ENCODE measurements at regions of chr2 and their contacts with region 1.

Region 1: DNA sequence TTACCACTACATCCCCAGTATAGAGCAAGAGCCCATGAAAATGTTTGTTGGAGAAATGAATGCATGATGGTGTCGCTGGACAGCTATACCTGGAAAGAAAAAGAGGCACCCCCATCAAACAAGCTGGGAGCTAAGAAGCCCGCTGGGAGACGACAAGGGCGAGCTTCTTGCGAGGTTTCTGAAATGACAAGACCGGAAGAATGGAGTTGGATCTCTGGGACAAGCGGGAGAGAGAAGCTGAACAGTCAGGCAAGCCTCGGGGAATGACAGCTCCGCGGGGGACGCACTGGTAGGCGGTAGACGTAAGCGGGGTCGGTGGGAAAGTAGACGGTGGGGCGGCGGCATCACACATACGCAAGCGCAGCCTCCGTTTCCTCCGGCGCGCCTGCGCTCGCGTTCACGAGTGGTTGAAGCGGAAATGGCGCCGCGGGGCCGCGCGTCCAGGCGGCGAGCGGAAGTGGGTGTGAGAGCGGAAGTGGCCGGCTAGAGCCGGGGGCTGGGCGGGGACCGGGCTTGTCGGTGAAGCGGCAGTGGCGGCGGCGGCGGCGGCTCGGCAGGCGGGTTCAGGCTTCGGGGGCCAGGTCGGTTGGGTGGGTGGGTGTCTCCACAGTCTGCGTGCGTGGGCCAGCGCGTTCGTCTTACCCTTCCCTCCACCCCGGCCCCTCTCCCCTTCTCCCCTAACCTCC is at the start of gene ARPC2:
- DNase-seq: peak; percentile 91 to 97 (median 95)
- ATAC-seq: peak; percentile 90
- H3K4me3 ChIP-seq: peak within 1 kb of the TSS; percentile 90
- H3K4me3 Mint-ChIP-seq: peak within 1 kb of the TSS; percentile 90 to 97 (median 94)
- H3K27ac ChIP-seq: peak within 1 kb of the TSS; percentile 99
- H3K27ac Mint-ChIP-seq: peak within 1 kb of the TSS; percentile 94 to 98 (median 97)
- H3K4me1 ChIP-seq: peaks cover 25 to 33% of the 10 kb centered on the region in 2 donors
- H3K4me1 Mint-ChIP-seq: peaks cover 31 to 48% (median 42%) of the 10 kb centered on the region in 7 donors
- H3K27me3 ChIP-seq: no peaks in the 10 kb centered on the region
- H3K27me3 Mint-ChIP-seq: peaks cover 0 to 6% (median 0%) of the 10 kb centered on the region in 5 donors
- total RNA-seq, gene ARPC2: 330 to 694 (median 368) TPM

Region 2: DNA sequence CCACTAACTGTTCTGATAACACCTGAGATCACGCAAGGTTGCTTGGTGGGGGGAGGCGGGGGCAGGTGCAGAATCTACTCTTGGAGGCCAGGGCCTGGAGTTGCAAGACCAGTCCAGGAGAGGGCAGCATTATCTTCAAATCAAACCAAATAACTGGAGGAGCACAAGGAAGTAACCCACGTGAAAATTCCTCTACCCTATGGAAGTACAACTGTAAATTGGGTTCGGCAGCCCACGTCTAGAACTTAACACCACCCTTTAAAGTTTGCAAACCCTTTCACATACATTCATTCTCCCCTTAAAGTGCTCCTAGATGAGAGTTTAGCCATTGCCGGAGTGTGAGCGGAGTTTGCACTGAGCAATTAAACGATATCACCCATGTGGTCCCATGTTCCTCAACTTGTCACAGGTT is 30.5 kb before region 1 on chr2:
- CTCF ChIA-PET with region 1: interaction called, 3 read pairs
- POLR2A ChIA-PET with region 1: interaction called, 3 read pairs
- intact Hi-C with region 1: loop called in 1 of 2 experiments (anchors 1 kb)
- DNase-seq: peak; percentile 29 to 79 (median 70)
- ATAC-seq: peak; percentile 97
- H3K4me3 ChIP-seq: no peak overlapping the region
- H3K4me3 Mint-ChIP-seq: no peak overlapping the region
- H3K27ac ChIP-seq: no peak overlapping the region
- H3K27ac Mint-ChIP-seq: peak overlapping the region in 1 of 9 donors; percentile 3
- H3K4me1 ChIP-seq: no peaks in the 10 kb centered on the region
- H3K4me1 Mint-ChIP-seq: peaks cover 0 to 14% (median 8%) of the 10 kb centered on the region in 7 donors
- H3K27me3 ChIP-seq: no peaks in the 10 kb centered on the region
- H3K27me3 Mint-ChIP-seq: peaks cover 0 to 24% (median 0%) of the 10 kb centered on the region in 5 donors

Region 3: GRCh38 chr2:218257390-218257981 is 40.7 kb after region 1 on chr2:
- CTCF ChIA-PET with region 1: interaction called, 6 read pairs
- POLR2A ChIA-PET with region 1: interaction called, 4 read pairs
- intact Hi-C with region 1: loop called (anchors 1 kb)
- DNase-seq: peak; percentile 39 to 67 (median 59)
- ATAC-seq: peak; percentile 85
- H3K4me3 ChIP-seq: no peak overlapping the region
- H3K4me3 Mint-ChIP-seq: peak overlapping the region; percentile 42 to 68 (median 52)
- H3K27ac ChIP-seq: peak overlapping the region; percentile 67
- H3K27ac Mint-ChIP-seq: peak overlapping the region; percentile 84 to 95 (median 92)
- H3K4me1 ChIP-seq: peaks cover 0 to 7% of the 10 kb centered on the region in 2 donors
- H3K4me1 Mint-ChIP-seq: peaks cover 7 to 23% (median 17%) of the 10 kb centered on the region in 7 donors
- H3K27me3 ChIP-seq: no peaks in the 10 kb centered on the region
- H3K27me3 Mint-ChIP-seq: no peaks in the 10 kb centered on the region

Region 4: GRCh38 chr2:218659258-218659987 is 442.6 kb after region 1 on chr2 and contains the starts of genes BCS1L and ZNF142:
- CTCF ChIA-PET with region 1: no interaction called
- POLR2A ChIA-PET with region 1: no interaction called
- intact Hi-C with region 1: loop called in 1 of 2 experiments (anchors 5 kb)
- DNase-seq: peak; percentile 75 to 95 (median 90)
- ATAC-seq: peak; percentile 99
- H3K4me3 ChIP-seq: peak within 1 kb of the TSS; percentile 83
- H3K4me3 Mint-ChIP-seq: peak within 1 kb of the TSS; percentile 90 to 99 (median 98)
- H3K27ac ChIP-seq: peak within 1 kb of the TSS; percentile 80
- H3K27ac Mint-ChIP-seq: peak within 1 kb of the TSS; percentile 74 to 96 (median 93)
- H3K4me1 ChIP-seq: peaks cover 7 to 15% of the 10 kb centered on the region in 2 donors
- H3K4me1 Mint-ChIP-seq: peaks cover 25 to 45% (median 38%) of the 10 kb centered on the region in 7 donors
- H3K27me3 ChIP-seq: no peaks in the 10 kb centered on the region
- H3K27me3 Mint-ChIP-seq: no peaks in the 10 kb centered on the region
- total RNA-seq, gene BCS1L: 21.4 to 62.0 (median 49.0) TPM
- total RNA-seq, gene ZNF142: 38.7 to 49.8 (median 40.8) TPM

Region 5: DNA sequence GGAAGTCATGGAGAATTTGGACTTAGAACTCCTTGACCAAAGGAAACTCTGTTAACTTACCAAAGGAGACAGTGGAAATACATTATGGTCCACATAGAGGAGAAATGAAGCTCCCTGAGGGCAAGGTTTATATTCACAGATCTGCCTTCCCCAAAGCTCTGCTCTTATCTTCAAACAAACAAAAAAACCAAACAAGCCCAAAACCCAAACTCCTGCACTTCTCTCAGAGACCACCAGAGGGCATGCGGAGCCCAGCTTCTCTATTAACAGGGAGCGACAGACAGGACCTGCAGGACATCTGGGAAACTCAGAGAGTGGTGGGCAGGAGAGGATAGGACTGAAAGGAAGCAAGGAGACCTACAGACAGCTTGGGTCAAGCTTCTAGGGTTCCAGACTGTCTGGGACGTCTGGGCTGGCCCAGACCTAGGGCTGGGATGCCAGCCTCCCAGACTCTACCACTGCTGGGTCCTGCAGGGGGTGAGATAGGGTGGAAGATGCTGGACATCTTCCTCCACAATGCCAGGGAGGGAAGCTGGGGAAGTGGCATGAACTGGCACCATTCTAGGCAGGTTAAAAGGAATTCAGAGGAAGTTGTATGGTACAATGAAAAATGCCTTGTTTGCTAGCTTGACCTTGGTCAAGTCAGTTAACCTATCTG is 659.9 kb after region 1 on chr2:
- CTCF ChIA-PET with region 1: no interaction called
- POLR2A ChIA-PET with region 1: no interaction called
- intact Hi-C with region 1: loop called in 1 of 2 experiments (anchors 5 kb)
- DNase-seq: peak in 8 of 9 donors; percentile 53 to 85 (median 74)
- ATAC-seq: peak; percentile 24
- H3K4me3 ChIP-seq: no peak overlapping the region
- H3K4me3 Mint-ChIP-seq: peak overlapping the region in 3 of 10 donors; percentile 1 to 19 (median 3)
- H3K27ac ChIP-seq: no peak overlapping the region
- H3K27ac Mint-ChIP-seq: peak overlapping the region in 3 of 9 donors; percentile 48 to 53 (median 52)
- H3K4me1 ChIP-seq: peaks cover 26 to 42% of the 10 kb centered on the region in 2 donors
- H3K4me1 Mint-ChIP-seq: peaks cover 24 to 53% (median 43%) of the 10 kb centered on the region in 7 donors
- H3K27me3 ChIP-seq: peaks cover 8 to 18% of the 10 kb centered on the region in 2 donors
- H3K27me3 Mint-ChIP-seq: peaks cover 18 to 77% (median 29%) of the 10 kb centered on the region in 5 donors

Region 6: DNA sequence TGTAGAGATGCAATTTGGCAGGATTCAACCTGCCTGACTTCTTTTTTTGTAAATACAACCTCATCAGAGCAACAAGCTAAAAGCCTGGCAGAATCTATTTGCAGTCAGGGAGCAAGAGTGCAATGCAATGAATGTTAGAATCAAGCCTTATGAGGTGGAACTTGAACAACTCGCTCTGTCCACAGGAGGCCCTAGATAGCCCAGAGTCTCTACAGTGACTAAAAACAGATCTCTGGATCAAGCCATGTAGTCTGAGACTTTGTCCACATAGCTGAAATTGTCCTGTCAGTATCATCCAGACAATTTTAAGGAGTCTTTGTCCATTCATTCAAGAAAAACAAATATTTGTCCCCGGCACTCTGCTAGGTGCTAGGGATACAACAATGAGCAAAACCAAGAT is 710.6 kb after region 1 on chr2:
- CTCF ChIA-PET with region 1: no interaction called
- POLR2A ChIA-PET with region 1: no interaction called
- intact Hi-C with region 1: no loop called
- DNase-seq: no peak
- ATAC-seq: no peak
- H3K4me3 ChIP-seq: no peak overlapping the region
- H3K4me3 Mint-ChIP-seq: no peak overlapping the region
- H3K27ac ChIP-seq: no peak overlapping the region
- H3K27ac Mint-ChIP-seq: no peak overlapping the region
- H3K4me1 ChIP-seq: no peaks in the 10 kb centered on the region
- H3K4me1 Mint-ChIP-seq: no peaks in the 10 kb centered on the region
- H3K27me3 ChIP-seq: no peaks in the 10 kb centered on the region
- H3K27me3 Mint-ChIP-seq: peaks cover 20 to 65% (median 48%) of the 10 kb centered on the region in 5 donors

Region 7: DNA sequence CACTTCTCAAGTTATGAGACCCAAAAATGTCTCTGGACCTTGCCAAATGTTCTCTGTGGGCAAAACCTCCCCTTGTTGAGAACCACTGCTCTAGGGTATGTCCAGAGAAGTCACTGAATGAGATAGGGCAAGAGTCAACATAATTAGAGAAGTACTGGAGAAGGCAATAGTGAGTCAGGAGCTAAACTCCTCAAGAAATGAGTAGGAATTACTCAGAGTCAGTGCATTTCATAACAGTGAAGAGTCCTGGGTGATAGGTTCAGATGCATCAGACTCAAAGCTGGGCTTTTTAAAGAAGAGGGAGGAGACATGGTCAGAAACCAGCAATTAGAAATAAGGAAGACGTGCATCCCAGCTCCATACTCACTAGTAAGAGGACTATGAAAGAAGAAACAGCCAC is 882.5 kb after region 1 on chr2:
- CTCF ChIA-PET with region 1: no interaction called
- POLR2A ChIA-PET with region 1: no interaction called
- intact Hi-C with region 1: no loop called
- DNase-seq: no peak
- ATAC-seq: no peak
- H3K4me3 ChIP-seq: no peak overlapping the region
- H3K4me3 Mint-ChIP-seq: no peak overlapping the region
- H3K27ac ChIP-seq: no peak overlapping the region
- H3K27ac Mint-ChIP-seq: no peak overlapping the region
- H3K4me1 ChIP-seq: no peaks in the 10 kb centered on the region
- H3K4me1 Mint-ChIP-seq: peaks cover 0 to 4% (median 2%) of the 10 kb centered on the region in 7 donors
- H3K27me3 ChIP-seq: no peaks in the 10 kb centered on the region
- H3K27me3 Mint-ChIP-seq: no peaks in the 10 kb centered on the region